WTC11 (cell line): ENCODE measurements at regions of chr9 and their contacts with region 1.

Region 1: DNA sequence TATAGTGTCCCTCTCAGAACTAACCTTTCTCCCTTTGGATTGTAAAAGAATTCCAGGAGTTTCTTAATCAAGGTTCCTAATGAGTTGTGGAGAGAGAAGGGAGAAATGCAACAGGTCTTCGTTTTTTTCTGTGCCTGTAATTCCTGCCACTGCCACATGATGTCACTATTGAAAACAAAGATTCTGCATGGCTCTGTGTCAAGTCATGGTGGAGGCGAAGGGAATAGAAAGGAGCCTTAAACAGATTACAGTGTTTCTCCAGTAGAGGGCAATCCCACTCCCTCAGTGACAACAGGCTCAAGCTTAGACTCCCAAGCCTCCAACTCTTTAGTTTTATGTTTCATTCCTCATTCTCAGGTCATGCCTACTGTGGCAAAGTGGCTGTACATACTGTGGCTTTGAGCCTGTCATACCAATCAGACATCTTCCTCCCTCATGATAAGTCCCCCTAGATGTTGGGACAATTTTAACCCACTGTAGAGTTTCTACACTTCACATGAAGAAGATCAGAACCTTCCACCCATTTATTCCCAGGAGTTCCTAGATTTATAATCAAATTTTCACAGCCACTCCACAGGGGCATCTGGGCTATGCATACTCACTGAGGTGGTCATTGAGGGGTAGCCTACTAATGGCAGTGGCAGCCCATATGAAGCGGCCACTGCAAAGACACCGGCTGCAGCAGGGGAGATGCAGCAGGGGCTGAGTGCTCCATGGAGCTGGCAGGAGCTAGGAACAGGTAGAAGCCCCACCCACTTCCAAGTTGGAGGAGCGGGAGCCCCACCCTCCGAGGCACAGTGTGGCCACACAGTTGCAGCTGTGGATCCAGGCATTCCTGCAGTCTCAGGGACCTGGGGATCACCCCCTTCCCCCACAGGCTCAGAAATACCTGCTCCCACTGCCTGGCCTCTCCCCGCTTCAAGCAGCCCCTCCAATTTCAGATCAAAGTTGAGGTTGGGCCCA is 97.4 kb upstream of the TRIM32 start:
- DNase-seq: peak; percentile 64
- ATAC-seq: peak; percentile 93
- H3K4me3 Mint-ChIP-seq: no peak overlapping the region
- H3K27ac Mint-ChIP-seq: peak overlapping the region; percentile 73; the same call in 1 of the 2 replicates
- H3K4me1 Mint-ChIP-seq: peaks cover 4% of the 10 kb centered on the region
- H3K27me3 Mint-ChIP-seq: no peaks in the 10 kb centered on the region
- CTCF ChIP-seq: peak; percentile 71; the same call in 1 of the 2 replicates

Region 2: DNA sequence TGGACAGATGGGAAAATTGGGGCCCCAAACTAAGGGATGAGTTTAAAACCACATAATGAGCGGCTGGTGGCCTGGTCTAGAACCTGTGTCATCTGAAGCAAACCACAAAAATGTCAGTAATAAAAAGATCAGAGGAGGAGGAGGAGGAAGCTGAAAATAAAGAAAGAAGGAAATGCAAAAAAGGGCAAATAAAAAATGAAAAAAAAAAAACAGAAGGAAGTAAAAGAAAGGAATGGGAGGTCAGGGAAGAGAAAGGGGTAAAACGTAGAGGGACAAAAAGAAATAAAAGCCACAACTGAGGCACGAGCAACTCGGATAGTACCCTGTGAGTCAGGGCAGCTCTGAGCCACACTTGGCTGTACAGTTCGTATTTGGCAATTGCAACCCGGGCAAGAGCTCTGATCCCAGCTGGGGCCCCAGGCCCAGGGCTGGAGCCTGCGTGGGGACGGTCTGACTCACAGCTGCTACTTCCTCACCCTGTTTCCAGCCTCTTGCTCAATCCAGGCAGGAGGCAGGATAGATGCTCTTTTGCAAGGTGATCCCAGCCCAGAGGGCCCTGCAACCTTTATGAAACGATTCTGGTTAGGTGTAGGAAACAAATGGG is 40.5 kb before region 1 on chr9:
- CTCF ChIA-PET with region 1: no interaction called
- POLR2A ChIA-PET with region 1: no interaction called
- DNase-seq: no peak
- ATAC-seq: no peak
- H3K4me3 Mint-ChIP-seq: no peak overlapping the region
- H3K27ac Mint-ChIP-seq: no peak overlapping the region; the same call in 1 of the 2 replicates
- H3K4me1 Mint-ChIP-seq: 0 out of 2 replicates have a peak, but pooled peaks cover 3% of the 10 kb centered on the region
- H3K27me3 Mint-ChIP-seq: no peaks in the 10 kb centered on the region
- CTCF ChIP-seq: no peak

Region 3: DNA sequence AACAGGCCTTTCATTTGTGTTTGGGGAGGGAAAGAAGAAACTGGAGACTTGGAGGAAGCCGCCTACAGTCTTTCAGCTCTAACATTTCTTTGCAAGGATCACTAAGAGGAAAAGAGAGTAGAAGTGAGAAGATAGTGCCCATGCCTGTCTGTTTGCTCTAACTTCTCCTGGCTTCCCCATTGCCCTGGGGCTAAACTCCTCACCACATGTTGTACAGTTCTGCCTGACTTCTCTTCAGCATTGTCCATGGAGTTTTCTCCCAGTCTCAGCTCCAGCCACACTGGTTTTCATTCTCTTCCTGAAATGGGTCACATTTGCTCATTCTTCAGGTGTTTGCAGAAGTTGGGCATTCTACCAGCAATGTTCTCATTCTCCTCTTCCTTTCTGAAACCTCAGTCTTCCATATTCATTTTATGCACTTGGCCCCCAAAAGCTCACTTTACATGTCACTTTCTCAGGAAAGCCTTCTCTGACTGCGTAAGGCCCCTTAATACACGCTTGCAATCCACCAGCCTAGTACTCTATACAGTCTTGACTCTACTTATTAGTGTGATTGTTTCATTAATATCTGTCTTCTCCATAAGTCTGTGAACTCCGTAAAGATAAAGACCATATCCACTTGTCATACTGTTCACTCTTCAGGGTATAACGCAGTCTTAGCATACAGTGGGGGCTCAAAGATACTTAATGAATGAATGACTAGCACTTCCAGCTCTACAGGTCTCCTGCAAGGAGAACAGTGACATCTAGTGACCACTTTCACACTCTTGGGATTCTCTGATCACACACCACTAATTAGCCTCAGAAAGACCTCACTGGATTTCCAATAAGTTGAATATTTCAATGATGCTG is 57.2 kb after region 1 on chr9:
- CTCF ChIA-PET with region 1: interaction called, 25 read pairs
- POLR2A ChIA-PET with region 1: no interaction called
- DNase-seq: no peak
- ATAC-seq: peak; percentile 97
- H3K4me3 Mint-ChIP-seq: no peak overlapping the region
- H3K27ac Mint-ChIP-seq: no peak overlapping the region
- H3K4me1 Mint-ChIP-seq: no peaks in the 10 kb centered on the region
- H3K27me3 Mint-ChIP-seq: no peaks in the 10 kb centered on the region
- CTCF ChIP-seq: no peak

Region 4: GRCh38 chr9:116661037-116661954 is 71.6 kb after region 1 on chr9:
- CTCF ChIA-PET with region 1: interaction called, 19 read pairs
- POLR2A ChIA-PET with region 1: no interaction called
- DNase-seq: no peak
- ATAC-seq: peak; percentile 91
- H3K4me3 Mint-ChIP-seq: no peak overlapping the region
- H3K27ac Mint-ChIP-seq: no peak overlapping the region
- H3K4me1 Mint-ChIP-seq: peaks cover 6% of the 10 kb centered on the region; the same call in 1 of the 2 replicates
- H3K27me3 Mint-ChIP-seq: no peaks in the 10 kb centered on the region
- CTCF ChIP-seq: peak; percentile 61